Activated B cell treated with CpG ODN at 0.5 μM for 24 hours (primary cell): ENCODE measurements at regions of chr20 and their contacts with region 1.

Region 1: GRCh38 chr20:3115190-3116107 is 30.9 kb upstream of the AVP start:
- DNase-seq: no peak
- ATAC-seq: peak; percentile 77
- H3K4me3 Mint-ChIP-seq: no peak overlapping the region
- H3K27ac Mint-ChIP-seq: no peak overlapping the region
- H3K4me1 Mint-ChIP-seq: peaks cover 3% of the 10 kb centered on the region
- H3K27me3 Mint-ChIP-seq: no peaks in the 10 kb centered on the region
- CTCF ChIP-seq: peak; percentile 78

Region 2: GRCh38 chr20:3051385-3052019 is 63.9 kb before region 1 on chr20:
- CTCF ChIA-PET with region 1: interaction called, 27 read pairs
- POLR2A ChIA-PET with region 1: no interaction called
- intact Hi-C with region 1: loop called (anchors 1 kb)
- DNase-seq: no peak
- ATAC-seq: no peak
- H3K4me3 Mint-ChIP-seq: no peak overlapping the region
- H3K27ac Mint-ChIP-seq: no peak overlapping the region
- H3K4me1 Mint-ChIP-seq: peaks cover 6% of the 10 kb centered on the region
- H3K27me3 Mint-ChIP-seq: no peaks in the 10 kb centered on the region
- CTCF ChIP-seq: no peak

Region 3: DNA sequence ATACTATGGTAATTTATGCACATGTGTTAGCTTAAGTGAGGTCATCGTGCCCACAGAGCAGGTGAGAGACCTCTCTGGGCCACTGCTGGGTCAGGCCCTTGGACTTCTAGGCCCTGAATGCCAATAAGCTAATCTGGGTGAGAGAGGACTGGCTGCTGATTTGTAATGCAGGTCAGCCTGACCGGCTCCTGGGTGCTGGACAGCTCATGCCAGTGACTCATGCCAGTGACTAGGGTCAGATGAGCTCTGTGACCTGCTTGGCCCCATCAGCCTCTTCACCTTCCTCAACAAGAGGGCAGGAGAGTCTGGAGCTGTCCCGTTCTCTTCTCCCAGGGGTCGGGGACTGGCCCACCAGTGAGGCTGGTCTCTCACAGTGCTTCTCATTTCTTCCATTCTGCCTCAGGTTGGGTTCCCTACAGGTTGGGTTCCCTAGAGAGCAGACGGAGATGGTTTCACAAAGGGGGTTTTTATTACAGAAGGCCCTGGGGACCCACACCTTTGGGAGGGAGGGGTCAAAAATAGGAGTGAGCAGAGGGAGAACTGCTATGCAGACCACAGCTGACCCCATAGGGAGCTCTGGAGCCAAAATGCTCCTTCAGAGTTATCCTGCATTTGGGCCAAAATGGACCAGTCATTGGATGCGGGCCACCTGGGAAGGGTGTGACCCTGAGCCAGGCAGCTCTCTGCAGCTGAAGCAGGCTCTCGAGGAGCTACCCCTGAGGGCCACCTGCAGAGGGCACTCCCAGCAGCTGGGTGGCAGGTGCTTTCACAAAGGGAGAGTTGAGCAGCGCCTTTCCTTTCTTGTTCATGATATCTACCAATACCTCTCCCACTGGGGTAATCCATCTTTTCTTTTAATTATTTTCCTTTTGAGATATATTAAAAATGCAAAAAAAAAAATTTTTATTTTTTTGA is 46.2 kb before region 1 on chr20:
- CTCF ChIA-PET with region 1: no interaction called
- POLR2A ChIA-PET with region 1: no interaction called
- intact Hi-C with region 1: loop called (anchors 1 kb)
- DNase-seq: no peak
- ATAC-seq: peak; percentile 18
- H3K4me3 Mint-ChIP-seq: no peak overlapping the region
- H3K27ac Mint-ChIP-seq: no peak overlapping the region
- H3K4me1 Mint-ChIP-seq: peaks cover 52% of the 10 kb centered on the region
- H3K27me3 Mint-ChIP-seq: peaks cover 4% of the 10 kb centered on the region
- CTCF ChIP-seq: no peak

Region 4: DNA sequence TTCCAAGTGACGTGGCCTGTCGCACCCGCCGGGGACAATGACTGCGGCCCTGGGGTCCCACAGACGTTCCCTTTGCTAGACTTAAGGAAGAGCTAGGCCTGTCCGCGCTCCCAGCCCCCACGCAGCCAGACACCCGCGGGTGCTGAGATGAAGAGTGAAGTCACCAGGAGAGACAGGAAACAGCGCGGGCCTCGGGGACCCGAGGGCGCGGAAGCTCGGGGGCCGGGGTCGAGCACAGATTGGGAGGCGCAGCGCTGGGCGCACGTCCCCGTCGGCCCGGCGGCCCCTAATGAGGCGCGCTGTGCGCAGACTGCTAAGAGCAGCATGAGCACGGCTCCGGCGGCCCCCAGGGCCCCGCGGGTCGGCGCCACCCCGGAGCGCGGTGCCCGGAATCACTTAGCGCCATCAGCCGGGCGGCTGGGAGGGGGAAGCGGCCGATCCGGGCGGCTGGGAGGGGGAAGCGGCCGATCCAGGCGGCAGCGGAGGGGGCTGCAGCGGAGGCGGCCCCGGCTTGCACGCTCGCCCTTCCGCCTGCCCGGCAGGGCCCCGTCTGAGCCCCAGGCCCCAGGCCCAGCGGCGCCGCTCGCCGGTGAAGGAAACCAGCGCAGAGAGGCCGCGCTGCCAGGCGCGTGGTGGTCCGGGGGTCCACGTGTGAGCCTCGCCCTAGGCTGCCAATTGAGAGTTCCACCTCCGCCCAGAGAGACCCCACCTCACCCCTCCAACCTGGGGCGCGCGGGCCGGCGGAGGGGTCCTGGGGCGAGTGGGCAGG is 22.7 kb before region 1 on chr20:
- CTCF ChIA-PET with region 1: no interaction called
- POLR2A ChIA-PET with region 1: no interaction called
- intact Hi-C with region 1: loop called (anchors 2 kb)
- DNase-seq: peak; percentile 47
- ATAC-seq: peak; percentile 54
- H3K4me3 Mint-ChIP-seq: peak overlapping the region; percentile 94
- H3K27ac Mint-ChIP-seq: peak overlapping the region; percentile 95
- H3K4me1 Mint-ChIP-seq: peaks cover 23% of the 10 kb centered on the region
- H3K27me3 Mint-ChIP-seq: peaks cover 22% of the 10 kb centered on the region
- CTCF ChIP-seq: no peak

Region 5: GRCh38 chr20:3156811-3157619 is 41.6 kb after region 1 on chr20:
- CTCF ChIA-PET with region 1: interaction called, 3 read pairs
- POLR2A ChIA-PET with region 1: no interaction called
- intact Hi-C with region 1: loop called (anchors 5 kb)
- DNase-seq: no peak
- ATAC-seq: peak; percentile 73
- H3K4me3 Mint-ChIP-seq: peak overlapping the region; percentile 70
- H3K27ac Mint-ChIP-seq: peak overlapping the region; percentile 80
- H3K4me1 Mint-ChIP-seq: peaks cover 62% of the 10 kb centered on the region
- H3K27me3 Mint-ChIP-seq: no peaks in the 10 kb centered on the region
- CTCF ChIP-seq: no peak

Region 6: GRCh38 chr20:3316136-3316535 is 200.7 kb after region 1 on chr20:
- CTCF ChIA-PET with region 1: interaction called, 6 read pairs
- POLR2A ChIA-PET with region 1: no interaction called
- intact Hi-C with region 1: loop called (anchors 1 kb)
- DNase-seq: no peak
- ATAC-seq: no peak
- H3K4me3 Mint-ChIP-seq: no peak overlapping the region
- H3K27ac Mint-ChIP-seq: no peak overlapping the region
- H3K4me1 Mint-ChIP-seq: no peaks in the 10 kb centered on the region
- H3K27me3 Mint-ChIP-seq: no peaks in the 10 kb centered on the region
- CTCF ChIP-seq: no peak